Mammary epithelial cell (primary cell): ENCODE measurements at regions of chr1 and their contacts with region 1.

Region 1: GRCh38 chr1:31669786-31670592 is 25.3 kb upstream of the PEF1 start:
- DNase-seq: peak; percentile 86
- H3K4me3 ChIP-seq: no peak overlapping the region
- H3K27ac ChIP-seq: peak overlapping the region; percentile 32
- H3K4me1 ChIP-seq: peaks cover 43% of the 10 kb centered on the region
- H3K27me3 ChIP-seq: no peaks in the 10 kb centered on the region
- CTCF ChIP-seq: peak; percentile 5 to 37

Region 2: GRCh38 chr1:31065310-31066217 is 604.4 kb before region 1 on chr1 and contains the start of gene PUM1:
- CTCF ChIA-PET with region 1: no interaction called
- dilution Hi-C with region 1: no loop called
- in situ Hi-C with region 1: no loop called
- intact Hi-C with region 1: no loop called
- DNase-seq: peak; percentile 99
- H3K4me3 ChIP-seq: peak within 1 kb of the TSS; percentile 70 to 72 (median 71)
- H3K27ac ChIP-seq: peak within 1 kb of the TSS; percentile 97
- H3K4me1 ChIP-seq: peaks cover 18% of the 10 kb centered on the region
- H3K27me3 ChIP-seq: no peaks in the 10 kb centered on the region
- CTCF ChIP-seq: no peak
- total RNA-seq, gene PUM1: 91.2 to 107 TPM

Region 3: DNA sequence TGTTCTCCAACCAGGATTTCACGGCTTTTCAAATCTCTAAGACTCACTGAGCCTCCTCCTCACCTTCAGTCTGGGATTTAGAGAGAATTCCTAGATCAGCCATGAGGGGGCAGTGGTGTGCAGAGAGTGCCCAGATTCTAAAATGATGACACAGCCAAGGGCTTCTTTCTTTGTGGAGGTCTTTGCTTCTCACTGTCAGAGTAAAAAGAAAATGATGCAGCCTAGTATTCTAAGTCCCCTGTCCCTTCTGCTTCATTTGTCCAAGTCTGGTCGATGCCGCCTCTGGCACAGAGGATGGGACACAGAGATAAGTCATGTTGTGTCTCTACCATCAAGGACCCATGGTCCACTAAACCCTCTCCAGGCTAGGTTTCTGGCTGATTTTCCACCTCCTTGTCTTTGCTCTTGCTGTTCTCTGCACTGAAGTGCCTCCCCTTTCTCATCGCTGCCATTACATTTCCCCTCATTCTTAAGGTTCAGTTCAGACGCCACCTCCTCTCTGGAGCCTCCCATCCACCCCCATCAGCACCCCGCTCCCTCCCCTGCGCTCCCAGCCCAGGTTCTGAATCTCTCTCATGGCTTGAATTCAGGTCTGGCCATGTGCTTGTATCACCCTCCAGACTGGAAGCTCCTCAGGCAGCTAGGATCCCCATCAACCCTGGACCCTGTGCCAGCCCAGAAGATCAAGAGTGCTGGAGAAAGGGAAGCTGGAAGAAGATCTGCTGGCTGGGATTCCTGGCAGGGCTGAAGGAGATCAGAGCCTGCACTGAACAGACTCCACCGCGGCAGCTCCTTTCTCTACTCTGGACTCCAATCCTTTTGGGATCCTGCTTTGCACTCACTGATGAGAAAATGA is 105.6 kb before region 1 on chr1:
- CTCF ChIA-PET with region 1: no interaction called
- dilution Hi-C with region 1: no loop called
- in situ Hi-C with region 1: no loop called
- intact Hi-C with region 1: no loop called
- DNase-seq: peak; percentile 52
- H3K4me3 ChIP-seq: no peak overlapping the region
- H3K27ac ChIP-seq: no peak overlapping the region
- H3K4me1 ChIP-seq: peaks cover 26% of the 10 kb centered on the region
- H3K27me3 ChIP-seq: no peaks in the 10 kb centered on the region
- CTCF ChIP-seq: peak; percentile 79 to 84

Region 4: DNA sequence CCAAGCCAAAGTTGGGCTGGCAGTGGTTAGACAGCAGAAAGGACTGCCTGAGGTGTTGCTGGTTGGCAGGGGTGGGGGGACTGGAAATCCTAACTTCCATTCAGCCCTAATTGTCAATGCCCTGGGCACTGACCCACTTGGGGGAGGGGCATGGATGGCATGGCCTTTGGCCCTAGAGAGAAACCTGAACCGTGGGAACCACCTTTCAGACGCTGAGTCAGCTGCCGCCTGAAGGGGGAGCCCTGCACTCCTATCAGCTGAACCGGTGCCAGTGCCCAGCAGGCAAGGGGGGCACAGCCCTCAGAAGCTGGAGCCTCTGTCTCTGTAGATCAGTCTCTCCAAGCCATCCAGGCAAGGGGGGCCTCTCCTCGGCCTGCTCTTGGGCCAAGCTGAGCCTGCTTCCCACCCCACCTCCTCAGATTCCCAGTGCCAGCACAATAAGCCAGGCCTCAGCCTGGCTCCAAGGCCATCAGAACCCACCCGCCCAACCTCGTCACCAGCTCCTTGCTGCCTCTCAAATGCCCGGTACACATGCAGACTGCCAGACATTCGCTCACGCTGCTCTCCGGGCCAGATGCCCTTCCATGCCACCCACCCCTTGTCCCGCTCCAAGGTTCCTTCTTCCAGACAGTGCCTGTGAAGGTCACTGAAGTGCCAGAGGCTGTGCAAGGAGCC is 82.1 kb before region 1 on chr1:
- CTCF ChIA-PET with region 1: no interaction called
- dilution Hi-C with region 1: loop called (anchors 5 kb)
- in situ Hi-C with region 1: no loop called
- intact Hi-C with region 1: no loop called
- DNase-seq: no peak
- H3K4me3 ChIP-seq: no peak overlapping the region
- H3K27ac ChIP-seq: no peak overlapping the region
- H3K4me1 ChIP-seq: peaks cover 53% of the 10 kb centered on the region
- H3K27me3 ChIP-seq: no peaks in the 10 kb centered on the region
- CTCF ChIP-seq: peak; percentile 47 to 84

Region 5: DNA sequence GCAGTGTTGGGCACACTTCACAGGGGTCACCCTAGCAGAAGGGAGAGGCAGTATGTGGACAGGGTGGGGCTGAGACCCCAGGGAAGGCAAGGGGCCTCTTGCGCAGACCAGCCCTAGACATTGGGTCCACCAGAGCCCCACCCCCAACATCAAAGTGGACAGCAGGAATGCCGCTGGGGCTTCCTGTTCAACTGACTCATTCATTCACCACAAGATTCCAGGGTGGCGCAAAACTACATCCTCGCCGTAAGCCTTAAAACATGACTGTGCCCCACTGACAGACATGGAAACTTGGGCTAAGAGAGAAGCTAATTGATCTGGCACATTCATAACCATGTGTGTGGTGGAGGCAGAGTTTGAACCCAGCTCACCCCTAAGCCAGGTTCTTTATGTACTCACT is 19.8 kb after region 1 on chr1:
- CTCF ChIA-PET with region 1: no interaction called
- dilution Hi-C with region 1: no loop called
- in situ Hi-C with region 1: no loop called
- intact Hi-C with region 1: loop called (anchors 1 kb)
- DNase-seq: peak; percentile 95
- H3K4me3 ChIP-seq: no peak overlapping the region
- H3K27ac ChIP-seq: peak overlapping the region; percentile 2
- H3K4me1 ChIP-seq: peaks cover 20% of the 10 kb centered on the region
- H3K27me3 ChIP-seq: no peaks in the 10 kb centered on the region
- CTCF ChIP-seq: no peak

Region 6: DNA sequence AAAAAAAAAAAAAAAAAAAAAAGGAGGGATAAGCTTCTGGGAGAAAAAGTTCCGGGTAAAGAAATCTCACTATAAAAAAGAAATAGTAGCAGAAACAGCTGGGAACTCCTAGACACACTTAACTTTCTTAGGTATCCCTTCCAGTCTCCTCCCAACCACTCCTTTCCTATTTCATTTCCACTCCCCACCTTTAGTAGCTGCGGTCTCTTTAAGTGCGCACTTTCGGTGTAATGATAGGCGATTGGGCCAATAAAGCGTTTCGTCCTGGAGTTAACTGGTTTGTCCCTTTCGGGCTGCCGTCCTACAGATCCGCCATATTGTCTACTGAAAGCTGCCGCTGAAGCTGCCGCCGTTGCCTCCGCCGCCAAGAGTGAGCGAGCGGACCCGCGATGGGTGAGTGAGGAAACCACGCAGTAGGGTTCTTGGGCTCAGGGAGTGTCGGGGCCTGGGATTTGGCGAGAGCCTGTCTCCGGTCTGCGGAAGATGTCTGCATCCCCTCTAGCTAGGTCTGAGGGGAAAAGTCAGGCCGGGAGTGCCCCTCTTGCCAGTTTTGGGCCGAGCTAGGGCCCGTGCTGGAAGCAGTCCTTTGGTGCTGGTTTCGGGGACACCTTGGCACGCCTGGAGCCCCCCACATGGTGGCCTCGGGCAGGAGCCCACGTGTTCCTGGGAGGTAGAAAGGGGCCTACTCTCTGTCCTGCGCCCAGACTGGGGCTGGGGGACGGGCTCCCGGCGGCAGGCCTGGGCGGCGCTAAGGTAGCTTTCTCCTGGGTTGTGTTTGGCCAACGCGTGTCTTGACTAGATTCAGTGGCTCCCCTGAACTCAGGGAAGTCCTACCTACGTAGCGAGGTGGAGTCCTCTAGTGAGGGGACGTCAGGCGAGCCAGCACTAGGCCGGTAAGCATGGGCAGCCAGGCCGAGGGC is 438.0 kb after region 1 on chr1 and contains the start of gene KPNA6:
- CTCF ChIA-PET with region 1: no interaction called
- dilution Hi-C with region 1: no loop called
- in situ Hi-C with region 1: no loop called
- intact Hi-C with region 1: no loop called
- DNase-seq: peak; percentile 96
- H3K4me3 ChIP-seq: peak within 1 kb of the TSS; percentile 51 to 75 (median 75)
- H3K27ac ChIP-seq: peak within 1 kb of the TSS; percentile 77
- H3K4me1 ChIP-seq: no peaks in the 10 kb centered on the region
- H3K27me3 ChIP-seq: no peaks in the 10 kb centered on the region
- CTCF ChIP-seq: no peak
- total RNA-seq, gene KPNA6: 83.5 to 92.7 TPM